Posterior cingulate gyrus (tissue), 11 donors: ENCODE measurements at regions of chr10 and their contacts with region 1.

Region 1: GRCh38 chr10:90862908-90863514 is 5.2 kb upstream of the HTR7 start:
- DNase-seq: no peak

Region 2: GRCh38 chr10:90148116-90148855 is 714.7 kb before region 1 on chr10:
- intact Hi-C with region 1: loop called (anchors 5 kb)
- DNase-seq: no peak

Region 3: GRCh38 chr10:90723416-90724068 is 139.5 kb before region 1 on chr10:
- intact Hi-C with region 1: no loop called
- DNase-seq: no peak

Region 4: DNA sequence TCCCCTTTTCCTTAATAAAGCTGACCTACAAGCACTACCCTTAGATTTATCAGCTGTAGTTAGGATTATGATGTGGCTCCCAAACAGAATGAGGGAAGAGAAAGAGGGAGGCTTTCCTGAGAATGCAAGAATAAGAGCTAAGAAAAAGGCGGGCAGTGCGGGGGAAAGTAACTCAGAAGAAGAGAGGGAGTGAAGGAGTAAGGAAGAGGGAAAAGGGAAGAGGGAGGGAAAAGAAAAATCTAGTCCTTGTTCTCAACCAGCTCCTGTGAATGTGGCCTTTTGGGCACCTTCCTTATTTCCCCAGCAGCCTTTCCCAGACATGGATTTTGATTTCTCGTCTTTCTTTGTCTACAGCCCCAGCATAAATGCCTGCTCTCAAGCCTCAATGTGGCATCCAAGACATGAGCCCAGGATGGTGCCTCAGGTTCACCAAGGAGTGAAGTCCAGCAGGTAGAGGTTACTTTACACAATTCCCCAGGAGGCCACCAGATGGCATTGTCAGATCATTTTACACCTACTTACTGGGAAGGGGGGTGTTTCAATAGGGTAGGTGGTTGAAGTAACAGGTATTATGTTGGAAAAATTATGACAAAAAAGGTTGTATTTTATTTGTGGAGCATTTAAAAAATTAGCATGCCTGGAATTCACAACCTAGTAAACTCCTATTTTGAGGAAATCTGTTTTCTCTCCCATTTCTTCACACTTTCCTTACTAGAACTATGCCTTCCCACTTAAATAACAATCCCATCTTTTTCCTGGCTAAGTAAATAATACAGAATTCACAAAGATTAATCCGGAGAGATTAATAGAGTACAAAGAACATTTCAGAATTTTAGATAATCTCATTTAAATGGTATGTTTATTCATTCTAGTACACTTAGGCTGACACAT is 111.7 kb before region 1 on chr10:
- intact Hi-C with region 1: loop called (anchors 2 kb)
- DNase-seq: peak in 5 of 10 donors; percentile 7 to 40 (median 31)